ENCODE measurements at regions of chr16 and their contacts with region 1.

Region 1: GRCh38 chr16:89343501-89344457 is 126.3 kb downstream of the ZNF778 start:
- DNase-seq: no peak
- H3K4me3 ChIP-seq: no peak overlapping the region
- H3K27ac ChIP-seq: peak overlapping the region in 1 of 4 donors; percentile 36
- H3K4me1 ChIP-seq: peaks cover 0 to 55% (median 34%) of the 10 kb centered on the region in 4 donors
- H3K27me3 ChIP-seq: no peaks in the 10 kb centered on the region
- CTCF ChIP-seq: no peak
- EP300 ChIP-seq: no peak
- POLR2A ChIP-seq: no peak

Region 2: DNA sequence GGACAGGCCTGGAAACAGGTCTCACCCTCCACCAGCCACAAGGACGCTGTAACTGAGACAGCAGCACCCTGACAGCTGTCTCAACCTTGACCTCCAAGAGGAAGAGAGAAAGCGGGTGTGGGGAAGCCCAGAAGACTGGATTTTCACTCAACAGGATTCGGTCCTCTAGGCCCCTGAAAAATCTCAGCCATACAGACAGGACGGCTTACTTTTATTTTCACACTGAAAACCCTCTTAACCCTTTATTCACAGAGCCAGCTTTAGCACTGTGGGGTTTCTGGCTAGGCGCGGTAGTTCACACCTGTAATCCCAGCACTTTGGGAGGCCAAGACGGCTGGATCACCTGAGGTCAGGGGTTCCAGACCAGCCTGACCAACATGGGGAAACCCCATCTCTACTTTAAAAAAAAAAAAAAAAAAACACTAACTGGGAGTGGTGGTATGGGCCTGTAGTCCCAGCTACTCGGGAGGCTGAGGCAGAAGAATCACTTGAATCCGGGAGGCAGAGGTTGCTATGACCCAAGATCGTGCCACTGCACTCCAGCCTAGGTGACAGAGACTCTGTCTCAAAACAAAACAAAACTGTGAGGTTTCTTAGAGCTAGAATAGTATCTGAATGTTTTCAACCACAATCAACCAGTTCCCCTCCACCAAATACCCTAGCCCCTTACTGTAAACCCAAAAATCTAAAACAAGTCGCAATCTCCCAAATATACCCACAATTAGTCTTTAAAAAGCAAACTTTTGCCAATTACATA is 141.3 kb after region 1 on chr16:
- intact Hi-C with region 1: loop called (anchors 5 kb)
- DNase-seq: no peak
- H3K4me3 ChIP-seq: no peak overlapping the region
- H3K27ac ChIP-seq: peak overlapping the region in 1 of 4 donors; percentile 13
- H3K4me1 ChIP-seq: peaks cover 0 to 82% (median 75%) of the 10 kb centered on the region in 4 donors
- H3K27me3 ChIP-seq: no peaks in the 10 kb centered on the region
- CTCF ChIP-seq: no peak
- EP300 ChIP-seq: no peak
- POLR2A ChIP-seq: no peak